CD14-positive monocyte (primary cell): ENCODE measurements at regions of chr10 and their contacts with region 1.

Region 1: DNA sequence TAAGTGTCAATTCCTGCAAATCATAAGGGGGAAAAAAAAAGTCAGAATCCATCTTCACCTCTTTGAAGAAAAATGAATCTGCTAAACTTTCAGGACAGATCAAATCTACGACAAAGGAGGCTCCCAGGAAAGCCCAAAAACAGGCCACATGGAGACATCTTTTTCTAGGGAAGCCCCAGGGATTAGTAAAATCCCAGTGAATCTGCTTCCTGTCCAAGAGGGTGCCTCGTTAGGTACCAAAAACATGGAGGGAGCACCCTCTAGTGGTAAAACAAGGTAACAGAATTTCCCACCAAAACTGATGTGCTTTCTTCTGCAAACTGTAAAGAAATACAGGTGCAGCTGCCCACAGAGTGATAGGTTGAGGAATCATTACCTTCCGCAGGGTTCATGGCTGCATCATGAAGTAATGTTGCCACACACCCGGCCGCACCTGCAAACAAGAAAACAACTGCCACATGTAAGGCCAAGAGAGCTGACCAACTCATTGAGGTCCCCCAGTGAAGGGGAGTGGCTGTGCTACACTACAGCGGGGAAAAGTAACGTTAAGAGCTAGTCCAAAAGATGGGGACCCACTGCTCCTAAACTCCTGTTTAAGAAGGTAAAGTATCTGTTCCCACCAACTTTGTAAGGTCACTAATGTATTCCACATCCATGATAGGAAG is 7.9 kb downstream of the SLC25A28 start:
- DNase-seq: peak; percentile 33 to 60 (median 59)
- H3K4me3 ChIP-seq: no peak overlapping the region
- H3K4me3 Mint-ChIP-seq: no peak overlapping the region
- H3K27ac ChIP-seq: no peak overlapping the region
- H3K27ac Mint-ChIP-seq: peak overlapping the region in 3 of 7 donors; percentile 44 to 55 (median 51)
- H3K4me1 ChIP-seq: peaks cover 5 to 10% of the 10 kb centered on the region in 2 donors
- H3K4me1 Mint-ChIP-seq: peaks cover 23% of the 10 kb centered on the region
- H3K27me3 ChIP-seq: no peaks in the 10 kb centered on the region
- H3K27me3 Mint-ChIP-seq: peaks cover 0 to 4% (median 0%) of the 10 kb centered on the region in 3 donors
- CTCF ChIP-seq: peak; percentile 92

Region 2: DNA sequence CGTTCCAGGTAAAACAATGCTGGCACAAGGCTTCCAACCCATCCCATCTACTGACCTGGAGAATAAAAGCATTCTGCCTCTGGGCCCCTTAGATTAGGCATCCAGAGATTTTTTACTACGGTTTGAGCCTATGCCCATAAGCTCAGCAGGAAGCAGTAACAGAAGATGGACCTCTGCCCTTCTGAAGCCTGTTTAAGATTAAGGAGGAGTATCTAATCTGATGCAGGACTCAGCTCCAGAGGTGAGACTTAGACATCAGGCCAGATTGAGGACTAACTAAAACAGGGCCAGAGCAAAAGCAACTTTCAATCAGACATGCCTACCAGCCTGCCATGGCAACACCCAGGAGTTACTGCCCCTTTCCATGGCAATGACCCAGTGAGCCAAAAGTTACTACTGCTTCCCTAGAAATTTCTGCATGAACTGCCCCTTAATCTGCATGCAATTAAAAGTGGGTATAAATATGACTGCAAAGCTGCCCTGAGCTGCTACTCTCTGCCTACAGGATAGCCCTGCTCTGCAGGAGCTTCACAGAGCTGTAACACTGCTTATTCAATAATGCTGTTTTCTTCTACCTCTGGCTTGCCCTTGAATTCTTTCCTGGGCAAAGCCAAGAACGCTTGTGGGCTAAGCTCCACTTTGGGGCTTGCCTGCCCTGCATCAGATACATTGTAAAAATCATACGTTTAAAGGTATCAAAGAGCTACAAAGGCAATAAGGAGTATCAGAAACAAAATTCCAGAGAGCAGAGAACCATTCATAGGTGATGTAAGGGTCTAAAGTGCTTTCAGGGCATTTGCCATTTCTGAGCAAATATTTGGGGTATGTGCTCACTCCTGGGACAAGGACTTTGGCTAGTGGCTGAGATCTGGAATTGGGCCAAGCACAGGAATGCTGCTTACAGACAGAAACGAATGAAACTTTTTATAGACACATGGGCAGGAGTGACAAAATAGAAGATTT is 308.1 kb before region 1 on chr10:
- intact Hi-C with region 1: no loop called
- DNase-seq: no peak
- H3K4me3 ChIP-seq: no peak overlapping the region
- H3K4me3 Mint-ChIP-seq: no peak overlapping the region
- H3K27ac ChIP-seq: no peak overlapping the region
- H3K27ac Mint-ChIP-seq: no peak overlapping the region
- H3K4me1 ChIP-seq: no peaks in the 10 kb centered on the region
- H3K4me1 Mint-ChIP-seq: no peaks in the 10 kb centered on the region
- H3K27me3 ChIP-seq: peaks cover 0 to 2% of the 10 kb centered on the region in 2 donors
- H3K27me3 Mint-ChIP-seq: peaks cover 2 to 8% (median 3%) of the 10 kb centered on the region in 3 donors
- CTCF ChIP-seq: no peak

Region 3: GRCh38 chr10:99395750-99396445 is 216.4 kb before region 1 on chr10:
- intact Hi-C with region 1: loop called (anchors 5 to 10 kb)
- DNase-seq: no peak
- H3K4me3 ChIP-seq: no peak overlapping the region
- H3K4me3 Mint-ChIP-seq: no peak overlapping the region
- H3K27ac ChIP-seq: no peak overlapping the region
- H3K27ac Mint-ChIP-seq: no peak overlapping the region
- H3K4me1 ChIP-seq: no peaks in the 10 kb centered on the region
- H3K4me1 Mint-ChIP-seq: peaks cover 5% of the 10 kb centered on the region
- H3K27me3 ChIP-seq: no peaks in the 10 kb centered on the region
- H3K27me3 Mint-ChIP-seq: peaks cover 1 to 3% (median 3%) of the 10 kb centered on the region in 3 donors
- CTCF ChIP-seq: no peak

Region 4: DNA sequence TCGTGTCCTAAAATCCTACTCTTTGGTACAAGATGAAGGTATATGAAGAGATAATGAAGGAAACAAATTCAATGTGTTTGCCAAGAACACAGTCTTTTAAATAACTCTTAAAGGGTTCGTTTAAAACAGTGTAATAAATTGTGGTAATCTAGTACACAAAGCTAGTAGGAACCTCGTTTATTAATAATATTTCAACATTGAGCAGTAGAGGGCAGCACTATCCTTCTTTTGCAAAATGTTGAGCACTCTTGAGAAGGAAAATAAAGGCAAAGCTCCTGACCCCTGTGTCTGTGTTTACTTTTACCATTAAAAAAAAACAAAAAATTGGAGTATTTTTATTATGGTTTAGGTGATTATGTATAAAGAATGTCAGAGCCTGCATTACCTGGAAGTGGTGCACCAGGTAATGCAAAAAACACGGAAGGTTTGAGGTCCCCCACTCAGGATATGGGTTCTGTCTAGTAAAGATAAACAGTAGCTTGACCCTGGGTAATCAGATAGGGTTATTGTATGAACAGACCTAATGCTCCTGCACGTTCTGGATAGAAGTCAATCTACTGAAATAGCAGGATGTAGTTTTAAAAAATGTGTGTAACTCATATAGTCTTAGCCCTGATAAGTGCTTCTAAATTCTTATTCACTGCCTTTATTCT is 176.2 kb before region 1 on chr10:
- intact Hi-C with region 1: loop called in 1 of 2 experiments (anchors 5 kb)
- DNase-seq: peak; percentile 9 to 42 (median 14)
- H3K4me3 ChIP-seq: no peak overlapping the region
- H3K4me3 Mint-ChIP-seq: no peak overlapping the region
- H3K27ac ChIP-seq: no peak overlapping the region
- H3K27ac Mint-ChIP-seq: no peak overlapping the region
- H3K4me1 ChIP-seq: peaks cover 4 to 5% of the 10 kb centered on the region in 2 donors
- H3K4me1 Mint-ChIP-seq: peaks cover 8% of the 10 kb centered on the region
- H3K27me3 ChIP-seq: no peaks in the 10 kb centered on the region
- H3K27me3 Mint-ChIP-seq: peaks cover 0 to 7% (median 0%) of the 10 kb centered on the region in 3 donors
- CTCF ChIP-seq: peak; percentile 72

Region 5: DNA sequence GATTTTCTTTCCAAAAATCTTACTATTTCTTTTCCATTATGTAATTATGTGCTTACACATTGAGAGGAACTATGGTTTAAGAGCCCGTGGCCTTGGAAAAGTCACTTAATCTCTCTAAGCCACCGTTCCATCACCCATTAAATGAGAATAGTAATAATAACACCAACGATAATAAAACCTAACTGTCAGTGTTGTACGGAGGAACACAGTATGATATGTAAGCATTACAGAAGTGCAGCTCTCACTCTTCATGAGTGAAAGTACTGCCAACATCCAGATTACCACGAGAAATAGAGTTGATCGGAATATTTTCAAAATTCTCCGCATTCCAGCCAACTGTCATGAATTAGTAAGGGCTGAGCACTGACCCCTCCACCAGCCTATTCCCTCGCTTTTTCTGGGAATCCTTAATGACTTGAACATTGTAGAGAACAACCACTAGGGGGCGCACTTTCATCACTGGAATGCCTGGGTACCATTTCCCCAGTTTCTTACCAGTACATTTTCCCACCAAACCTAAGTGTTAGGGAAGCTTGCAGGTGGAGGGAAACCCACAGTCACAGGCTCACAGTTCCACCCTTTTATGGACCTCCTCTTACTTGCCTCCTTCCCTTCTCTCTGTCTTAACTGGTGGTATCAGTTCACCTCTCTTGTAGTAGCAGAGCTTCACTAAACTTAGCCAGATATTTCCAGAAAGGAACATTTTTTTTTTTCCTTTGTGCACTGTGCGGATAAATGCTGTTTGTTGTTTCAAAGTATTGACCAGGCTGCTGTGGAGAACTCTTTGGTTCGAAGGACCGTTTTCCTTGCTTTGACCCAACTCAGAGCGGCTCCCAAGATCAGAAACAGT is 51.8 kb before region 1 on chr10:
- intact Hi-C with region 1: loop called in 1 of 2 experiments (anchors 2 kb)
- DNase-seq: peak; percentile 25 to 62 (median 58)
- H3K4me3 ChIP-seq: no peak overlapping the region
- H3K4me3 Mint-ChIP-seq: no peak overlapping the region
- H3K27ac ChIP-seq: no peak overlapping the region
- H3K27ac Mint-ChIP-seq: no peak overlapping the region
- H3K4me1 ChIP-seq: no peaks in the 10 kb centered on the region
- H3K4me1 Mint-ChIP-seq: peaks cover 10% of the 10 kb centered on the region
- H3K27me3 ChIP-seq: no peaks in the 10 kb centered on the region
- H3K27me3 Mint-ChIP-seq: peaks cover 2 to 3% (median 2%) of the 10 kb centered on the region in 3 donors
- CTCF ChIP-seq: peak; percentile 89

Region 6: DNA sequence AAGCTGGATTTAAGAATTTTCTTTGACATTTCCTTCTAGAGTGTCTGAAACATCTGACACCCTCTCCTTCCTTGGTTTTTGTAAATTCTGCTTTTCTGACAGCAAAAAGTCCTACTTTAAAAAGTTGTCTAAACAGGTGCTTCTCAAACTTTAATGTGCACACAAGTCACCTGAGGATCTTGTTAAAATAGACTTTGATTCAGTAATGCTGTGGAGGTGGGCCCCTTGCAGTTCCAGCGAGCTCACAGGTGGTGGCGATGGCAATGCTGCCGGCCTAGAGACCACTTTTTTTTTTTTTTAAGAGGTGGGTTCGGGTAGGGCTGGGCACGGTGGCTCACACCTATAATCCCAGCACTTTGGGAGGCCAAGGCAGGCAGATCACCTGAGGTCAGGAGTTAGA is 247.3 kb after region 1 on chr10:
- intact Hi-C with region 1: no loop called
- DNase-seq: no peak
- H3K4me3 ChIP-seq: no peak overlapping the region
- H3K4me3 Mint-ChIP-seq: no peak overlapping the region
- H3K27ac ChIP-seq: no peak overlapping the region
- H3K27ac Mint-ChIP-seq: no peak overlapping the region
- H3K4me1 ChIP-seq: no peaks in the 10 kb centered on the region
- H3K4me1 Mint-ChIP-seq: no peaks in the 10 kb centered on the region
- H3K27me3 ChIP-seq: peaks cover 0 to 2% of the 10 kb centered on the region in 2 donors
- H3K27me3 Mint-ChIP-seq: peaks cover 6 to 17% (median 13%) of the 10 kb centered on the region in 3 donors
- CTCF ChIP-seq: no peak